Activated CD4-positive, alpha-beta T cell treated with anti-CD3 and anti-CD28 coated beads, Interleukin-2, amount 10 ng/mL, durations not matched to agents 24 days and 14 days (primary cell): ENCODE measurements at regions of chr7 and their contacts with region 1.

Region 1: DNA sequence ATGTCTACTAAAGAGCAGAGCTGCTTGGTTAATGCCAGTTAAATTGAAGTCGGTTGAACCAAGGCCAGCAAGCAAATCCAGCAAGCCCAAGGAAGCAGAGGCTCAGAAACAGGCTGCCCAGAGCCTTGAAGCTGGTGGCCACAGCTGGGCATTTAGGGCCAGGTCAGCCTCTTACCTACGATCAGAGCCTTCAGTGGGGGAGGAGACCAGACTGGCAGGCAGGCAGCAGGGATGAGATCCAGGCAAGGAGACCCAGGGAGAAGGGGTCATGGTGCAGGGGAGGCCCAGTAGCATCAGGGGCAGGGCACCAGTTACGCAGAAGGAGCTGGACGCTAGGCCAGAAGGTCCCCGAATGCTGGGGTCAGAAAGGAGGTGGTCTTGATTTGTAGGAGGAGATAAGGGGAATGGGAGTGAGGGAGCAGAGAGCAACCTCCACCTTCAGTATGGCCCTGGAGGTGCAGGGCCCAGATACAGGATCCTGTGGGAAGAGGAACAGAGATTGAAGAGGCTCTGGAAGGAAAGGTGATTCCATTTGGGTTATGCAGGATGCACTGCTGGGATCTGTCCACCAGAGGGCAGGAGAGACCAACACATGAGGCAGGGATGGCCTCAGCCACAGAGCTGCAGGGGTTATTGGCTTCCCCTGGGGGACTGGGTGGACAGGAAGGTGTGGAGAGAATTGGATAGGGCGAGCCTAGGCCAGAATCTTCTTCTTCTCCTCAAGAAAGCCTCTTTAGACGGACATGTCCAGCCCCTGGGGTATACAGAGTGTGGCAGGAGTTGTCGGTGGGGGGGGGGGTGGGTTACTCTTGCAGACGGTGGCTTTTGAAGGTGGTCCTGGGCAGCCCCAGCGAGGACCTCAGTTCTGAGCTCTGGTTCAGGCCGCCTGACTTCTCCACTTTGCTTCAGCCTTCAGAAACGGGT is 132.6 kb upstream of the PODXL start:
- DNase-seq: peak; percentile 88
- H3K4me3 Mint-ChIP-seq: no peak overlapping the region
- H3K27ac Mint-ChIP-seq: no peak overlapping the region
- H3K4me1 Mint-ChIP-seq: peaks cover 3% of the 10 kb centered on the region
- H3K27me3 Mint-ChIP-seq: no peaks in the 10 kb centered on the region

Region 2: GRCh38 chr7:131859147-131859821 is 170.3 kb after region 1 on chr7:
- intact Hi-C with region 1: loop called (anchors 10 kb)
- DNase-seq: peak; percentile 80
- H3K4me3 Mint-ChIP-seq: no peak overlapping the region
- H3K27ac Mint-ChIP-seq: no peak overlapping the region
- H3K4me1 Mint-ChIP-seq: no peaks in the 10 kb centered on the region
- H3K27me3 Mint-ChIP-seq: no peaks in the 10 kb centered on the region

Region 3: GRCh38 chr7:132049462-132050304 is 360.7 kb after region 1 on chr7:
- intact Hi-C with region 1: loop called (anchors 10 kb)
- DNase-seq: peak; percentile 75
- H3K4me3 Mint-ChIP-seq: no peak overlapping the region
- H3K27ac Mint-ChIP-seq: no peak overlapping the region
- H3K4me1 Mint-ChIP-seq: no peaks in the 10 kb centered on the region
- H3K27me3 Mint-ChIP-seq: peaks cover 5% of the 10 kb centered on the region